Naive thymus-derived CD4-positive, alpha-beta T cell (primary cell): ENCODE measurements at regions of chr12 and their contacts with region 1.

Region 1: GRCh38 chr12:76426160-76426559 is 77.9 kb upstream of the BBS10 start:
- DNase-seq: no peak
- ATAC-seq: no peak
- H3K4me3 ChIP-seq: no peak overlapping the region
- H3K4me3 Mint-ChIP-seq: no peak overlapping the region
- H3K27ac ChIP-seq: no peak overlapping the region
- H3K27ac Mint-ChIP-seq: no peak overlapping the region
- H3K4me1 ChIP-seq: no peaks in the 10 kb centered on the region
- H3K4me1 Mint-ChIP-seq: peaks cover 6 to 55% (median 44%) of the 10 kb centered on the region in 7 donors
- H3K27me3 ChIP-seq: no peaks in the 10 kb centered on the region
- H3K27me3 Mint-ChIP-seq: no peaks in the 10 kb centered on the region

Region 2: GRCh38 chr12:76445469-76445868 is 19.3 kb after region 1 on chr12:
- CTCF ChIA-PET with region 1: interaction called, 4 read pairs
- POLR2A ChIA-PET with region 1: no interaction called
- intact Hi-C with region 1: loop called in 1 of 2 experiments (anchors 2 kb)
- DNase-seq: no peak
- ATAC-seq: no peak
- H3K4me3 ChIP-seq: no peak overlapping the region
- H3K4me3 Mint-ChIP-seq: peak overlapping the region in 2 of 10 donors; percentile 36
- H3K27ac ChIP-seq: no peak overlapping the region
- H3K27ac Mint-ChIP-seq: peak overlapping the region in 2 of 9 donors; percentile 7 to 32
- H3K4me1 ChIP-seq: peaks cover 0 to 7% of the 10 kb centered on the region in 2 donors
- H3K4me1 Mint-ChIP-seq: peaks cover 16 to 63% (median 56%) of the 10 kb centered on the region in 7 donors
- H3K27me3 ChIP-seq: no peaks in the 10 kb centered on the region
- H3K27me3 Mint-ChIP-seq: no peaks in the 10 kb centered on the region